ENCODE measurements at regions of chr2 and their contacts with region 1.

Region 1: GRCh38 chr2:201231781-201232466 is 28.4 kb upstream of the CASP8 start:
- DNase-seq: peak; percentile 92
- H3K4me3 ChIP-seq: peak overlapping the region; percentile 23; the same call in 1 of the 2 replicates
- H3K27ac ChIP-seq: peak overlapping the region; percentile 38
- H3K4me1 ChIP-seq: peaks cover 54% of the 10 kb centered on the region
- H3K27me3 ChIP-seq: no peaks in the 10 kb centered on the region
- CTCF ChIP-seq: peak; percentile 93

Region 2: GRCh38 chr2:200713003-200713703 is 518.8 kb before region 1 on chr2:
- CTCF ChIA-PET with region 1: no interaction called
- POLR2A ChIA-PET with region 1: no interaction called
- intact Hi-C with region 1: loop called (anchors 2 kb)
- DNase-seq: peak; percentile 86 to 98
- H3K4me3 ChIP-seq: peak overlapping the region; percentile 43; the same call in 1 of the 2 replicates
- H3K27ac ChIP-seq: peak overlapping the region; percentile 88
- H3K4me1 ChIP-seq: peaks cover 14% of the 10 kb centered on the region
- H3K27me3 ChIP-seq: no peaks in the 10 kb centered on the region
- CTCF ChIP-seq: peak; percentile 94

Region 3: DNA sequence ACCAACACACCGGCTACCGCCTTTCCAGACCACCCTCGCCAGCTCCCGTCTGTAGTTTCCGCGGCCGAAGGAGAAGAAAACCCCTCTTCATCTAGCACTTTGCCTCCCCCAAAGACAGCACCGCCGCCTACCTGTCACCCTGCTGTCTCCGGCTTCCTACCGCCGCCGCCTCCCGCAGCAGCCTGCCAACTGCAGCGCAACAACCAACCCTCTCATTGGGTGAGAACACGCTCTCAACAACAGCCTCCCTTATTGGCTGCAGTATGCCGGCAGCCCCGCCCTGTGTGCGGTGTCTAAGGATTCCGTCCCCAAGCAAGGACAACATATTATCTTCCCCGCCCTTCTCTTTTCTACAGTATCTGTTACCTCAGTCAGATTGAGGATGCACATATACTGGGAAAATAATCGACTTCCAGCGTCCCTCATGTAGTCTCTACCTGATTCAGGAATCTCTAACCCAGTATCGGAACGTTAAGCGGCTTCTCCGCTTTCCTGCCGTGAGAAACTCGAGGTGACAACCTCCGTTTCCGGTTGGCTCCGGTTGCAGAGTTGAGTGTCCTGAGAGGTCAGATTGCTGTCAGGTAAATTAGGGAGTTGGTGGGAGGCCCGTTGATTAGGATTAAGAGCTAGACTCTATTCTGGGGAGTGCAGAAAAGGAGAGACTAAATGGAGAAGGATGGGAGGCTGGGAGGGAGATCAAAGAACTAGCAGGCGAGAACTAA is 160.3 kb before region 1 on chr2 and contains the starts of genes HYCC2 and NDUFB3:
- CTCF ChIA-PET with region 1: no interaction called
- POLR2A ChIA-PET with region 1: interaction called, 3 read pairs
- intact Hi-C with region 1: loop called (anchors 5 kb)
- DNase-seq: peak; percentile 84 to 92
- H3K4me3 ChIP-seq: peak within 1 kb of the TSS; percentile 66
- H3K27ac ChIP-seq: peak within 1 kb of the TSS; percentile 72
- H3K4me1 ChIP-seq: peaks cover 18% of the 10 kb centered on the region
- H3K27me3 ChIP-seq: no peaks in the 10 kb centered on the region
- CTCF ChIP-seq: peak; percentile 37; the same call in 1 of the 2 replicates
- total RNA-seq, gene HYCC2: 8.8 and 10.7 TPM in 2 replicates
- total RNA-seq, gene NDUFB3: 93.1 and 96.7 TPM in 2 replicates

Region 4: GRCh38 chr2:201220102-201220570 is 11.8 kb before region 1 on chr2:
- CTCF ChIA-PET with region 1: interaction called, 11 read pairs
- POLR2A ChIA-PET with region 1: interaction called, 8 read pairs
- intact Hi-C with region 1: loop called (anchors 1 kb)
- DNase-seq: peak; percentile 53 to 68
- H3K4me3 ChIP-seq: no peak overlapping the region
- H3K27ac ChIP-seq: peak overlapping the region; percentile 49
- H3K4me1 ChIP-seq: peaks cover 24% of the 10 kb centered on the region
- H3K27me3 ChIP-seq: no peaks in the 10 kb centered on the region
- CTCF ChIP-seq: no peak

Region 5: DNA sequence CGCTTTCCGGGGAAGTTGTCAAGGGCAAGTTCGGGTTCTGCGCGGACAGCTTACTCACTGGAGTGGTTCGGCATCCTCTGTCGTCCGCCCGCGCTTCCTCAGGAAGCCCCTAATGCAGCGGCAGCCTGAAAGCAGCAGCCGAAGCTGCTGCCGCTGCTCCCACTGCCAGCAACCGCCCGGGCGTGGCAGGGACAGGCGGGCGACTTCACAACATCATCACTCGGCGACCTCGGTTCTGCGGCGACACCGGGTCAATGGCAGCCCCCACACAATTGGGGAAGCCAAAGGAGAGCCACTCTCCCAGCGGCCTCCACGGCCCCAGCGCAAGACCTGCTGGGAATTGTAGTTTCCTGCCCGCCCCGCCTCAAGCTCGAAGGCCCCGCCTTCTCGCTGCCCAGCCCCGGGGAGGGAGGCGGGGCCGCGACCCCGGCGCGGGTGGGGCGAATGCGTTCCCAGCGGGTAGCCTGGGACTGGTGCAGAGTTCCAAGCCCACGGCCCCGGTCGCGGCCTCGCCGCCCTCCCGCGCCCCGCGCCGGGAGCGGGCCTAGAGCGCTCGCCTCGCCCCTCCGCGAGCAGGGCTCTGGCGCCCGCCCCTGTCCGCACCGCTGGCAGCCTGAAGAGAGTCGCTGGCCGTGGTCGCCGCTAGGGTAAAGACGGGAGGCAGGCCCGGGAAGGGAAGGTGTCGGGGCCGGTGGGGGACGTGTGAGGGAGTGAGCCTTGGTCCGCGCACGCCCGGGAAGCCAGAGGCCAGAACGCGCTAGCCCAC is 219.6 kb after region 1 on chr2 and contains the starts of genes STRADB and TRAK2:
- CTCF ChIA-PET with region 1: no interaction called
- POLR2A ChIA-PET with region 1: no interaction called
- intact Hi-C with region 1: loop called (anchors 5 kb)
- DNase-seq: peak; percentile 86 to 95
- H3K4me3 ChIP-seq: peak within 1 kb of the TSS; percentile 99
- H3K27ac ChIP-seq: no peak within 1 kb of the TSS; the same call in 1 of the 2 replicates
- H3K4me1 ChIP-seq: peaks cover 34% of the 10 kb centered on the region
- H3K27me3 ChIP-seq: no peaks in the 10 kb centered on the region
- CTCF ChIP-seq: no peak
- total RNA-seq, gene STRADB: 24.0 and 32.1 TPM in 2 replicates
- total RNA-seq, gene TRAK2: 18.8 and 33.2 TPM in 2 replicates

Region 6: GRCh38 chr2:201768918-201769317 is 537.0 kb after region 1 on chr2:
- CTCF ChIA-PET with region 1: interaction called, 12 read pairs
- POLR2A ChIA-PET with region 1: no interaction called
- intact Hi-C with region 1: no loop called
- DNase-seq: no peak
- H3K4me3 ChIP-seq: no peak overlapping the region
- H3K27ac ChIP-seq: no peak overlapping the region
- H3K4me1 ChIP-seq: no peaks in the 10 kb centered on the region
- H3K27me3 ChIP-seq: no peaks in the 10 kb centered on the region
- CTCF ChIP-seq: no peak